AG04449 (cell line): ENCODE measurements at regions of chr1 and their contacts with region 1.

Region 1: GRCh38 chr1:212477014-212477679 is 44.4 kb downstream of the NENF start:
- DNase-seq: peak; percentile 38
- H3K4me3 ChIP-seq: no peak overlapping the region
- CTCF ChIP-seq: peak; percentile 91

Region 2: GRCh38 chr1:212488397-212489283 is 11.5 kb after region 1 on chr1:
- CTCF ChIA-PET with region 1: interaction called, 38 read pairs
- POLR2A ChIA-PET with region 1: no interaction called
- DNase-seq: peak; percentile 36
- H3K4me3 ChIP-seq: no peak overlapping the region
- CTCF ChIP-seq: no peak

Region 3: GRCh38 chr1:212608209-212608955 is 131.2 kb after region 1 on chr1 and contains the start of gene ATF3:
- CTCF ChIA-PET with region 1: interaction called, 8 read pairs
- POLR2A ChIA-PET with region 1: interaction called, 13 read pairs
- DNase-seq: peak; percentile 97
- H3K4me3 ChIP-seq: peak within 1 kb of the TSS; percentile 82
- CTCF ChIP-seq: no peak

Region 4: DNA sequence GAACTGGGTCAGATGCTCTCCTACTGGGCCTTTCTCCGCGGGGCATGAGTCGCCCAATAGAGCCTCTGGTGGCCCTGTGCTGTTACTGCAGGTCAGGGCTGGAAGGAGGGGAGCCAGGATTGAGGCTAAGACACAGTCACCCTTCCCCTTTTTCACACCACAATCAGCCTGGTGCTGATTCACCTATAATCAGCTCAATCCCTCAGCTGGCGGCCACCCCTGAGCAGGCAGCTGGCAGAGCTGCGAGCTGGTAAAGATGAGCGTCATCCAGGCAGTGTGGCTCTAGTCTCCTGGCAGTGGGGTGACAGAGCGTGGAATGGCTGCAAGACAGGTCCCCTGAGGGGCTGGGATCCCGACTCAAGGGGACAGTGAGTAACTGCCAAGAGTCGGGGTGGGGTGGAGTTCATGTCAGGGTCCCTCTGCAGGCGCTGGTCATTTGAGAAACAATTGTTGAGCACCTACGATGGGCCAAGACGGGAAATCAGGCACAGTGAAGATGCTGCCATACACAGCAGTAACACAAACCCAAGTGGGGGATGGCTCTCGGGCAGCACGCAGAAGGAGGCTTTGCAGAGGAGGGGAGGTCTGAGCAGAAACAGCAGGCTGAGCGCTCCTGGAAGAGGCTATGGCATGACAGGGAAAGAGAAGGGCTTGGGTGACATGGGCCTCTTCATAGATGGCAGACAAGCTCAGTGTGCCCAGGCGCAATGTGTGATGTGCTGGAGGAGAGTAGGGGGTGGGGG is 153.2 kb after region 1 on chr1:
- CTCF ChIA-PET with region 1: interaction called, 16 read pairs
- POLR2A ChIA-PET with region 1: no interaction called
- DNase-seq: no peak
- H3K4me3 ChIP-seq: no peak overlapping the region
- CTCF ChIP-seq: peak; percentile 91

Region 5: GRCh38 chr1:212774584-212774983 is 297.4 kb after region 1 on chr1:
- CTCF ChIA-PET with region 1: interaction called, 12 read pairs
- POLR2A ChIA-PET with region 1: no interaction called
- DNase-seq: no peak
- H3K4me3 ChIP-seq: no peak overlapping the region
- CTCF ChIP-seq: no peak